Activated CD8-positive, alpha-beta memory T cell treated with anti-CD3 and anti-CD28 coated beads, Interleukin-2, amount 10 ng/mL, durations not matched to agents 7 days and 5 days (primary cell): ENCODE measurements at regions of chr13 and their contacts with region 1.

Region 1: GRCh38 chr13:99269627-99270241 is 11.6 kb upstream of the GPR18 start:
- DNase-seq: no peak
- ATAC-seq: peak; percentile 70
- H3K4me3 Mint-ChIP-seq: no peak overlapping the region
- H3K27ac Mint-ChIP-seq: no peak overlapping the region
- H3K4me1 Mint-ChIP-seq: peaks cover 62% of the 10 kb centered on the region
- H3K27me3 Mint-ChIP-seq: no peaks in the 10 kb centered on the region

Region 2: DNA sequence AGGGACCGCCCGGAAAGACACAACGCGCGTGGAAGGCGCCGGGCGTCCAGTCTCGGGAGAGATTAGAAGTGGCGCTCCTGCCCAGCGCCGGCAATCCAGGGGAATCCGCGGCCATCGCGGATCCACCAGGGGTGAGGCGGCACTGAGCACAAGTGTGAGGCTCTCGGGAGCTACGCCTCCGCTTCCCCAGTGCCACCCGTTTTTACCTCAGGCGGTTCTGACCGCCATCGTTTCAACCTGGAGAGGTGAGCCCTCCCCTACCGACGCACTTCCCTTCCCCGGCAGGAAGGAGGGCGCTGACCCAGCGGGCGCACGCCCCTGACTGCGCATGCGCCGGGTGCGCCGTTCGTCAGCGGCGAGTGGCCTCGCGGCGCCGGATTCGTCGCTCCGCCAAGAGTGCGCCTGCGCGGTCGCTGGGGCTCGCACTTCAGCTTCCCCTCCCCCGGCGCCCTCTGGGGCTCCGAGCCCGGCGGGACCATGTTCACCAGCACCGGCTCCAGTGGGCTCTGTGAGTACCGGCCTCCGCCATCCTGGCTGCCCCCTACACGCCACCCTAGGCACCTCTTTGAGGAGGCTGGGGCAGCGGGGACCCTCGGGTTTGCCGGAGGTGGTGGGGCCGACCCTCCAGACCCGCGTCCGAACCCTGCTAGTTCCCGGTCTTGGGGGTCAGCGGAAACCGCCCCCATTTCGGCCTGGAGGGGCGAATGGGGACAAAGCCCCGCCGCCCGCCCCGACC is 69.1 kb before region 1 on chr13 and contains the start of gene UBAC2:
- CTCF ChIA-PET with region 1: interaction called, 151 read pairs
- DNase-seq: peak; percentile 97
- ATAC-seq: peak; percentile 86
- H3K4me3 Mint-ChIP-seq: peak within 1 kb of the TSS; percentile 91
- H3K27ac Mint-ChIP-seq: peak within 1 kb of the TSS; percentile 92
- H3K4me1 Mint-ChIP-seq: peaks cover 54% of the 10 kb centered on the region
- H3K27me3 Mint-ChIP-seq: no peaks in the 10 kb centered on the region
- total RNA-seq, gene UBAC2: 52.8 to 60.8 TPM

Region 3: DNA sequence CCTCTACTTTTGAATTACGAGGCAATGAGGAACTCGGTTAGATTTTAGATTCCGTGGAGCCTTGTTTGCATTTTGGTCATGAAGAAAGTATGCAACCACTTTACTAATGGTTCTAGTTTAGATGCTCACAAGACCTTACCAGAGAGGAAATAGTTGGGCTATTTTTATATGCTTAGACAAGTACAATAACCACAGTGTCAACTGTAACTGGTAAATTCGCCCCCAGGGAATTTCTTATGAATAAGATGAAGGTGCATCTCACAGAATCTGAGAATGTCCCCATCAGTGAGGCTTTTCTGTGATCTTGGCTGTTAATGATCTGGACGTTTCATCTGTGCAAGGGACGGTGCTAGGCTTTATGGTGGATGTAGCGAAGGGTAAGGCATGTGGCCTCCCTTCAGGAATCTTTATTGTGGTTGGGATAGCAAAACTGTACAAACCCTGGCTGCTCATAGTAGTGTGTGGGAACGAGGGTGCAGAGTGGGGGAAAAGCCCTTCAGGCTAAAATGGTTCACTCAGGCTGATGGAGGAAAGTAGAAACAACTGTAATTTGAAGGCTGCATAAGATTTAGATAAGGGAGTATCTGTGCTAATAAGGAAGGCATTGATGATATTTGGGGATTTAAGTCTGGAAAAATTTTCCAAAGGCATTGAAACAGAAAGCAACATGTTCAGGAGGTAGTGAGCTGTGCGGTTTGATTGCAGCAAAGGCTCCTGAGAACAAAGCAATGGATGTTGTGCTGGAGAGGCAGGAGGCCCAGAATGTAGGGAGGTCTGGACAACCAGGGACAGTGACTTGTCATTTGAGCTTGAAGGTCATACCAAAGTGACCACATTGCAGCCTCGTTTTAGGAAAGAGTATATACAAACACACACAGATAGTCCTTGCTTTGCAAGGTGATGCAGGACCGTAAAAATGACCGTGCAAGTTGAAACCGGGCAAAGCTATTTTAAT is 40.7 kb before region 1 on chr13:
- CTCF ChIA-PET with region 1: interaction called, 18 read pairs
- DNase-seq: no peak
- ATAC-seq: peak; percentile 34
- H3K4me3 Mint-ChIP-seq: peak overlapping the region; percentile 71
- H3K27ac Mint-ChIP-seq: peak overlapping the region; percentile 91
- H3K4me1 Mint-ChIP-seq: peaks cover 74% of the 10 kb centered on the region
- H3K27me3 Mint-ChIP-seq: no peaks in the 10 kb centered on the region

Region 4: DNA sequence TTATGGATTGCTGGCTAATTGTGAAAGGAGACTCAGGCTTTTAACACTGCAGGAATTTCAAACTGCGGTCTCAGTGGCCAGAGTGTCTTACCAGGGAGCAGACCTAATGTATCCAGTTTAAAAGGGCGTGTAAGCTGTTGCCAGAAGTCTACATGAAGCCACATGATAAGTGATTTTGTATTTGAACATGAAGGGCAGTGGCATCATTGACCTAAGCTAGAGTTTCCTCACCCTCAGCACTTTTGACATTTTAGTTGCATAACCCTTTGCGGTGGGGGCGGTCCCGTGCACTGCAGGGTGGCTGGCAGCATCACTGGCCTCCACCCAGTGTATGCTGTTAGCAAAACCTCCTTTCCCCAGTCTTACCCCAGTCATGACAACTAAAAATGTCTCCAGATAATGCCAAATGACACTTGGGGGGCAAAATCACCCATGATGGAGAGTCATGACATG is 12.1 kb after region 1 on chr13:
- CTCF ChIA-PET with region 1: interaction called, 12 read pairs
- DNase-seq: peak; percentile 67
- ATAC-seq: peak; percentile 52
- H3K4me3 Mint-ChIP-seq: no peak overlapping the region
- H3K27ac Mint-ChIP-seq: peak overlapping the region; percentile 35
- H3K4me1 Mint-ChIP-seq: peaks cover 85% of the 10 kb centered on the region
- H3K27me3 Mint-ChIP-seq: no peaks in the 10 kb centered on the region

Region 5: DNA sequence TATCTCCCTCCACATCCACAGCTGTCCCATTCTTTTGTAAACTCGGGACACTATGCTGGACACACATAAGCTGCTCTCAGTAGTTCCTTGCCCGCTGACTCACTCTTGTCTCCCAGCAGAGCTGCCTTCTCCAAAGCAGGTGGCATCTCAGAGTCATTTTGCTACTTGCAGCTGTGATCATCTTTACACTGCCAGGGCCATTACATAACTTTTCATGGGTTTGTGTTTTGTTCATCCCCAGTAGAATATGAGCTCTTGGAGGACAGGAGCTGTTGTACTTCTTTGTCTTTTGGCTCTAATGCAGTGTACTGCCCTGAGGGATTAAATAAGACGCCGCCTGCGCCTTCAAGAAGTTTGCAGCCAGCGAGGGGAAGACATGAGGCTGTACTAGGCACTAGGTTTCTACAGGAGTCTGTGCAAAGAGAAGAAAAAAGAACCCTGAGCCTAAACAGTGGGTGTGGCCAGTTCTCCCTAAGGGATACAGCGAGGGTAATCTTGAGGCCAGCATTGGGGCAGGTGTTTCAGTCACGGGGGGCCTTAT is 78.2 kb after region 1 on chr13:
- CTCF ChIA-PET with region 1: interaction called, 23 read pairs
- DNase-seq: no peak
- ATAC-seq: no peak
- H3K4me3 Mint-ChIP-seq: no peak overlapping the region
- H3K27ac Mint-ChIP-seq: no peak overlapping the region
- H3K4me1 Mint-ChIP-seq: peaks cover 41% of the 10 kb centered on the region
- H3K27me3 Mint-ChIP-seq: no peaks in the 10 kb centered on the region

Region 6: GRCh38 chr13:99374994-99375737 is 105.4 kb after region 1 on chr13:
- CTCF ChIA-PET with region 1: interaction called, 11 read pairs
- DNase-seq: no peak
- ATAC-seq: peak; percentile 29
- H3K4me3 Mint-ChIP-seq: peak overlapping the region; percentile 38
- H3K27ac Mint-ChIP-seq: peak overlapping the region; percentile 70
- H3K4me1 Mint-ChIP-seq: peaks cover 72% of the 10 kb centered on the region
- H3K27me3 Mint-ChIP-seq: no peaks in the 10 kb centered on the region

Region 7: GRCh38 chr13:99417201-99418102 is 147.7 kb after region 1 on chr13:
- CTCF ChIA-PET with region 1: interaction called, 13 read pairs
- DNase-seq: no peak
- ATAC-seq: no peak
- H3K4me3 Mint-ChIP-seq: no peak overlapping the region
- H3K27ac Mint-ChIP-seq: no peak overlapping the region
- H3K4me1 Mint-ChIP-seq: peaks cover 33% of the 10 kb centered on the region
- H3K27me3 Mint-ChIP-seq: no peaks in the 10 kb centered on the region